ENCODE measurements at regions of chr22 and their contacts with region 1.

Region 1: DNA sequence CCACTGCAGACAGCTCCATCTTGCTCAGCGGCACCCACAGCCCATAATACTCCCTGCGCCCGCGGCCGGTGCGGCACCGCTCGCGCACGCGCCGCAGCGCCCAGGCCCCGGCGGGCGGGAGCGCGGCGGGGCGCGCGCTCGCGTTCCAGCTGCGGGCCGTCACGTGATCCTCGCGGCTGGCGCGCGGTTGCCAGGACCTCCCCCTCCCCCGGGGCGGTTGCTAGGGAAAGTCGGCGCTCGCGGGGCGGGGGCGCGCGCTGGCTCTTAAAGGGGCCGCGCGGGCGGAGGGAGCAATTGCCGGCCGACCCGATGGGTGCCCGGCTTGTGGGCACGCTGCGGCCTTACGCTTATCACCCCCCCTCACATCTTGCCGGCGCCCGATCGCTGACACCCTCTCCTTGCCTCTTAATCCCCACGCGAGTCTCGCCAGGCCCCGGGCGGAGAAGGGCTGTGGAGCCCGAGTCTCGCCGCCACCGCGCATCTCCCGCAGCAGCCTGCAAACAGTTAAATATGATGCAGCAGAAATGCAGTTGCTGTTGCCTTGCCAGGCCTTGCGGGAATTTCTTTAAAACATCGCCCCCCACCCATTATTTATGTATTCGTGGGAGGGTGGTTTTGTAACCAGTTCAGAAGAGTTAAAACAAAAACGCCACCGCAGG is at the start of gene CBX6:
- DNase-seq: peak; percentile 95 to 97 (median 97)
- H3K4me3 ChIP-seq: peak within 1 kb of the TSS; percentile 25 to 86 (median 74)
- H3K27ac ChIP-seq: peak within 1 kb of the TSS; percentile 84 to 99 (median 88)
- H3K4me1 ChIP-seq: peaks cover 17 to 43% of the 10 kb centered on the region in 2 donors
- H3K27me3 ChIP-seq: no peaks in the 10 kb centered on the region
- CTCF ChIP-seq: no peak
- POLR2A ChIP-seq: peak in 1 of 2 donors; percentile 22
- total RNA-seq, gene CBX6: 48.0 to 151 (median 78.1) TPM

Region 2: DNA sequence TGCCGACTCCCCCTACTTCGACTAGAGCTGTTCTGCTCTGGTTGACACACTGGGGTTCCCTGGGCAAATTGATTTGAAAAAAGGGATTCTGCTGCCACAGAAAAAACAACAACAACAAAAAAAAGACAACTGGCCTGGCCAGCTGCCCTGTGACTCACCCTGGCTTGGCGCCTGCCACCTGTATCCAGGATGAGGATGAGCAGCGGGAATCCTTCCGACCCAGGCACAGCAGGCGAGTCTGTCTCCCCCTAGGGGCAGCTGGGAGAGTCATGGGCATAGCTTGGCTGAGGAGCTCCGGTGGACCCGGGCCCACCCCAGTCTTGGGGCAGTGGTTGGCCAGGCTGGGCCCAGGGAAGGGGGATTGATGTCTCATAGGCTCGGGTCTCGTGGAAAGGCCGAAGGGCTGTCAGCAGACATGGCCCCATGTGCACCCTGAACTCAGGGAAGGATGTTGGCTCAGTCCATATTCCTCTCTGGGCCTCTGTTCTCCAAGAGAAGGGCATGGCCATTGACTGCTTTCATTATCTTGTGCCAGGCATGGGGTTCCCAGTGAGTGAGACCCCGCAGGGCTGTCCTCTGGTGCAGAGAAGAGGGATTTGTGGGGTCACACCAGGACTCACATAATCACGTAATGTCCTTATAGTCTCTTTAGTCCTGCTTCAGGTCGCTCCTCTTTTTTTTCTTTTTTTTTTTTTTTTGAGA is 106.1 kb before region 1 on chr22:
- intact Hi-C with region 1: loop called (anchors 5 kb)
- DNase-seq: peak; percentile 83 to 93 (median 90)
- H3K4me3 ChIP-seq: no peak overlapping the region
- H3K27ac ChIP-seq: no peak overlapping the region
- H3K4me1 ChIP-seq: no peaks in the 10 kb centered on the region
- H3K27me3 ChIP-seq: no peaks in the 10 kb centered on the region
- CTCF ChIP-seq: peak; percentile 68 to 81 (median 79)
- POLR2A ChIP-seq: no peak

Region 3: DNA sequence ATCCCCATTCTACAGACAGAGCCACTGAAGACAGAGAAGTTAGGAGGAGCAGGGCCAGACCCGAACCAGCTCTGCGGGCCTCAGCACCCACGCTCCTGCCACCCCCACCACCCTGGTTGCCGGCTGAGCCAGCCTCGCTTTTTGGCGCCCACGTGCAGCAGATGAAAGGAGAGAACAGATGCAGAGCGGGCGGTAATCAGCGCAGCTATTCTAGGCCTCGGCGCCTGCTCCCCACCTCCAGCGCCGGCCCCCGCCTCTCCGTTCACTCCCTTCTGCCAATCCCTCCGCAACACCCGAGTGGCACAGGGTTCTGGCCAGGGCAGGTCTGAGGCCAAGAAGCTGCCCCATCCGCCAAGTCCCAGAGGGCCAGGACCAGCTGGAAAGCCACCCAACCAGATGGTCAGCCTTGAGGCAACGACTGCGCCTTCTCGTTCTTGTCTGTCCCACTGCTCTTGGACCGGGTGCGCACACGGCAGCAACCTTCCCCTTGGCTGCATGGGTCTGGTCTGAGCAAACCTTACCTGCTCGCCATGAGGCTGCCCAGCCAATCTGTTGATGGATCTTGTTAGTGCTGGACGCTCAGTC is 95.1 kb before region 1 on chr22:
- intact Hi-C with region 1: loop called in 1 of 2 experiments (anchors 5 kb)
- DNase-seq: no peak
- H3K4me3 ChIP-seq: no peak overlapping the region
- H3K27ac ChIP-seq: no peak overlapping the region
- H3K4me1 ChIP-seq: no peaks in the 10 kb centered on the region
- H3K27me3 ChIP-seq: no peaks in the 10 kb centered on the region
- CTCF ChIP-seq: no peak
- POLR2A ChIP-seq: no peak

Region 4: GRCh38 chr22:38927033-38927781 is 54.9 kb after region 1 on chr22:
- intact Hi-C with region 1: loop called (anchors 5 to 10 kb)
- DNase-seq: peak; percentile 69 to 90 (median 81)
- H3K4me3 ChIP-seq: peak overlapping the region in 1 of 4 donors; percentile 53
- H3K27ac ChIP-seq: peak overlapping the region in 2 of 5 donors; percentile 53 to 58
- H3K4me1 ChIP-seq: peaks cover 15 to 36% of the 10 kb centered on the region in 2 donors
- H3K27me3 ChIP-seq: no peaks in the 10 kb centered on the region
- CTCF ChIP-seq: peak; percentile 53 to 77 (median 62)
- POLR2A ChIP-seq: peak in 1 of 2 donors; percentile 16

Region 5: GRCh38 chr22:39003165-39003638 is 130.9 kb after region 1 on chr22:
- intact Hi-C with region 1: loop called (anchors 5 kb)
- DNase-seq: peak; percentile 70 to 88 (median 87)
- H3K4me3 ChIP-seq: no peak overlapping the region
- H3K27ac ChIP-seq: no peak overlapping the region
- H3K4me1 ChIP-seq: peaks cover 0 to 7% of the 10 kb centered on the region in 2 donors
- H3K27me3 ChIP-seq: no peaks in the 10 kb centered on the region
- CTCF ChIP-seq: peak; percentile 71 to 91 (median 82)
- POLR2A ChIP-seq: no peak

Region 6: DNA sequence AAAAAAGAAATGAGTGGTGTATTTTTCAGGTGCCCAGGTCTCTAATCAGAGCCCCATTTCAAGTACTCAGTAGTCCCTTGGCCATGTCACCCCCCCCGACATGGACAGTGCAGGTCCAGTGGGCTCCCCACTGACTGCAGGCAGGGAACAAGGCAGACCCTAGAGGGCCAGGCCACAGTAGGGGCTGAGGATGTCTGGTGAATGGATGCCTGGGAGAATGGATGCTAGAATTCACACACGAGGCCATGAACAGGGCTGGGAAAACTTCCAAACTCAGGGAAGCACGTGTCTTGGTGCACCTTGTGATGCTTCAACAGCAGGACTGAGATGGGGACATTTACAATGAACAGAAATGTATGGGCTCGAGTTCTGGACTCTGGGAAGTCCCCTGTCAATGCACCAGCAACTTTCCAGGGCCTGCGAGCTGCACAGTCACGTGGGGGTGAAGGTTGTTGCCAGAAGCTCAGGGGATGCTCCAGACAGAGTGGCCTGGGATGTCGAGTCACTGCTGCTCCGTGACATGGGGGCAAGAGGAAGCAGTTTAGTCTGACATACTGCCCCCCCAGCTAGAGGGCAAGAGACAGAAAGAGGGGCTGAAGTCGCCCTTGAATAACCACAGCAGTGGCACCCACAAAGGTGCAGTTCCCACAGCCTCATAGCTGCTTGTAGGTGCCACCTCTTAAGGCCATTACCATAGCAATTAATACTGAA is 207.9 kb after region 1 on chr22:
- intact Hi-C with region 1: no loop called
- DNase-seq: no peak
- H3K4me3 ChIP-seq: no peak overlapping the region
- H3K27ac ChIP-seq: no peak overlapping the region
- H3K4me1 ChIP-seq: peaks cover 0 to 7% of the 10 kb centered on the region in 2 donors
- H3K27me3 ChIP-seq: no peaks in the 10 kb centered on the region
- CTCF ChIP-seq: no peak
- POLR2A ChIP-seq: no peak

Region 7: GRCh38 chr22:39123751-39124601 is 251.7 kb after region 1 on chr22:
- intact Hi-C with region 1: loop called in 1 of 2 experiments (anchors 10 kb)
- DNase-seq: no peak
- H3K4me3 ChIP-seq: no peak overlapping the region
- H3K27ac ChIP-seq: no peak overlapping the region
- H3K4me1 ChIP-seq: no peaks in the 10 kb centered on the region
- H3K27me3 ChIP-seq: no peaks in the 10 kb centered on the region
- CTCF ChIP-seq: no peak
- POLR2A ChIP-seq: no peak

Region 8: GRCh38 chr22:39135090-39135896 is 263.0 kb after region 1 on chr22:
- intact Hi-C with region 1: loop called in 1 of 2 experiments (anchors 10 kb)
- DNase-seq: peak in 2 of 7 donors; percentile 20 to 35
- H3K4me3 ChIP-seq: no peak overlapping the region
- H3K27ac ChIP-seq: no peak overlapping the region
- H3K4me1 ChIP-seq: peaks cover 0 to 9% of the 10 kb centered on the region in 2 donors
- H3K27me3 ChIP-seq: no peaks in the 10 kb centered on the region
- CTCF ChIP-seq: peak in 4 of 6 experiments; percentile 9 to 38 (median 20)
- POLR2A ChIP-seq: no peak

Region 9: DNA sequence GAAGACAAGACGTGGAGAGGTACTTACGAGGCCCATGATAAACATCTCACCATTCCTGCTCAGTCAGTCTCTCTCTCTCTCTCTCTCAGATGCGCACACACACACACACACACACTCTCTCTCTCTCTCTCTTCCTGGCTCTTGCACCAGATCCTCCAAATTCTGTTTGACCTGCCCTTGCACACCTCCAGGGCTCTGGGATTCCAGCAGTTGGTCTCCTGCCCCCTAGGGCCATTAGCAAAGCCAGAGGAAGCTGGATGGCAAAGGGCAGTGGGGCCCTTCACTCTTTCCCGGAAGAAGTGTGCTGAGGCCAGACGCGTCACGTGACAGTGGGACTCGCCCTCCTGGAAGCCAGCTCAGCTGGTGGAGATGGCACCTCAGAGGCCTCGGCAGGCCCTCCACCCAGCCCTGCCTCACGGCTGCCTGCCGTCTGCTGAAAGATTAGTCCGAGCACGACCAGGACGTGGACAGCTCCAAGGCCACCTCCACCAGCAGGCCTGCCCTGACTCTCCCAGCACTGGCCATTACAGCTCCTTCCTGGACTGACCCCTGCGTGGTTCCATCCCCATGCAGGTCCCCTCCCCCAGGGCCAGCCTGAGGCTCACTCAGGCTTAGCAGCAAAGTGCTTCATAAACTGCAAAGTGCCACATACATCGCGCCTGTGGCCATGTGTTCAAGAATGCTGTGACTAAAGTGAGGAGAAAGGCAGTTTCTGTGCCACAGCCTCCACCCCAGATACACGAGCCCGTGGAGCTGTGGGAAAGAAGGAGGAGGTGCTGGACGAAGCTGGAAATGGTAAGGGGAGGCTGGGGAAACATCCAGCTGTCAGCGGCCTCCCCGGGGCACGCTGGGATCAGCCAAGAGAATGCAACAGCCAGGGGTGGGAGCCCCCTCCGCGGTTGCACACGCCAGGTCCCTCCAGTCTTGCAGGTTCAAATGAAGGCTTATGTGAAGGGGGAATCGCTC is 368.8 kb after region 1 on chr22:
- intact Hi-C with region 1: no loop called
- DNase-seq: peak in 4 of 7 donors; percentile 48 to 82 (median 50)
- H3K4me3 ChIP-seq: peak overlapping the region in 1 of 4 donors; percentile 52
- H3K27ac ChIP-seq: peak overlapping the region in 2 of 5 donors; percentile 41 to 50
- H3K4me1 ChIP-seq: peaks cover 11 to 29% of the 10 kb centered on the region in 2 donors
- H3K27me3 ChIP-seq: no peaks in the 10 kb centered on the region
- CTCF ChIP-seq: no peak
- POLR2A ChIP-seq: peak in 1 of 2 donors; percentile 11